Endothelial cell of umbilical vein (primary cell): ENCODE measurements at regions of chr4 and their contacts with region 1.

Region 1: DNA sequence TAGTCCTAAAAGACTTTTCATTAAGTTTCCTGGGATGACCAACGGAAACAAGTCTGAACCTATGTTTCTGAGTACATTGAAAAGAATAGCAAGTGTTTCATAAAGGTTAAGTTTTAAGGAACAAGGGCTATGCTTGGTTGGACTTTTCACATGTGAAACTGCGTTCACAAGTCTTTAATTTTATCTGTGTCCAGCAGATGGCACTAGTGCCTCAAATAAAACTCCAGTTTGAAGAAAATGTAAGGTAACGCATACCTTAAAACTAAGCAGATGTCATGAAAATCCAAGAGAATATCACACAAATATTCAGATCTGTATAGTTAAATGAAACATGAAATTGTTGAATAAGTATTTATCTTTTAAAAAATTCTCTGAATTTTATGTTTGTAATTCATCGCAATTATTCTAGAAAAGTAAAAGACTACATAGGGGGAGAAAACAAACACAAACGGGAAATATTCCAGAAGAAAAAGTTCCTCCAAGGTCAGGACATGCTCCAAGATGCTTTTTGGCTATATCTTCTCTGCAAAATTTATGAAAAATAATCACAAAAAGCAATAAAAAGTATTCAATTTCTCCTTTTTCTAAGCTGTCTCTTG is 89.6 kb upstream of the MAD2L1 start:
- DNase-seq: peak; percentile 79
- H3K4me3 ChIP-seq: no peak overlapping the region
- H3K27ac ChIP-seq: no peak overlapping the region
- H3K4me1 ChIP-seq: no peaks in the 10 kb centered on the region
- H3K27me3 ChIP-seq: no peaks in the 10 kb centered on the region
- CTCF ChIP-seq: peak; percentile 34
- POLR2A ChIP-seq: no peak

Region 2: GRCh38 chr4:120066517-120067340 is 89.5 kb before region 1 on chr4 and contains the start of gene MAD2L1:
- CTCF ChIA-PET with region 1: no interaction called
- POLR2A ChIA-PET with region 1: no interaction called
- dilution Hi-C with region 1: no loop called
- intact Hi-C with region 1: loop called (anchors 1 kb)
- DNase-seq: peak; percentile 99
- H3K4me3 ChIP-seq: peak within 1 kb of the TSS; percentile 55 to 79 (median 75)
- H3K27ac ChIP-seq: peak within 1 kb of the TSS; percentile 76
- H3K4me1 ChIP-seq: peaks cover 35% of the 10 kb centered on the region
- H3K27me3 ChIP-seq: no peaks in the 10 kb centered on the region
- CTCF ChIP-seq: no peak
- POLR2A ChIP-seq: peak; percentile 94
- total RNA-seq, gene MAD2L1: 35.4 and 41.4 TPM in 2 replicates

Region 3: GRCh38 chr4:120812216-120812615 is 656.0 kb after region 1 on chr4:
- CTCF ChIA-PET with region 1: no interaction called
- POLR2A ChIA-PET with region 1: no interaction called
- dilution Hi-C with region 1: no loop called
- intact Hi-C with region 1: loop called (anchors 5 kb)
- DNase-seq: no peak
- H3K4me3 ChIP-seq: no peak overlapping the region
- H3K27ac ChIP-seq: no peak overlapping the region
- H3K4me1 ChIP-seq: no peaks in the 10 kb centered on the region
- H3K27me3 ChIP-seq: no peaks in the 10 kb centered on the region
- CTCF ChIP-seq: no peak
- POLR2A ChIP-seq: no peak

Region 4: GRCh38 chr4:121050300-121050699 is 894.1 kb after region 1 on chr4:
- CTCF ChIA-PET with region 1: interaction called, 8 read pairs
- POLR2A ChIA-PET with region 1: no interaction called
- dilution Hi-C with region 1: no loop called
- intact Hi-C with region 1: loop called (anchors 5 kb)
- DNase-seq: peak; percentile 11
- H3K4me3 ChIP-seq: no peak overlapping the region
- H3K27ac ChIP-seq: no peak overlapping the region
- H3K4me1 ChIP-seq: no peaks in the 10 kb centered on the region
- H3K27me3 ChIP-seq: no peaks in the 10 kb centered on the region
- CTCF ChIP-seq: peak in 1 of 2 donors; percentile 8
- POLR2A ChIP-seq: no peak

Region 5: DNA sequence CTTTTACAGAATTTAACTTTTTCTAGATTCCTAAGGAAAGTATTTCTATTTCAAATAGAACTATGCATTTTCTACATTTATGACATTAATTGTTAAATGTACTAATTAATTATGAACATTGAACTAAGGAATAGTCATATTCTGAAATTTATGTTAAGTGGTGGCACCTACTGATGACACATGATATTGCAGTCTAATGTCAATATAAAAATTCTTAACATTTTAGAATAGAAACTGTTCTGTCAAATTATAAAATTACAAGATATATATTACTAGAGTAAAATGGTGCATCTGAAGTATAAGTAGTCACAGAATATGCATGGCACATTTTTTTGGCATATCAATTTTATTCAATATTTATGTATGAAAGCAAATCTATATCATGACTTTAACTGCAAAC is 956.3 kb after region 1 on chr4:
- CTCF ChIA-PET with region 1: interaction called, 13 read pairs
- POLR2A ChIA-PET with region 1: no interaction called
- dilution Hi-C with region 1: no loop called
- intact Hi-C with region 1: loop called (anchors 1 kb)
- DNase-seq: peak; percentile 7
- H3K4me3 ChIP-seq: no peak overlapping the region
- H3K27ac ChIP-seq: no peak overlapping the region
- H3K4me1 ChIP-seq: no peaks in the 10 kb centered on the region
- H3K27me3 ChIP-seq: peaks cover 5 to 8% of the 10 kb centered on the region in 2 experiments
- CTCF ChIP-seq: peak; percentile 1 to 13
- POLR2A ChIP-seq: no peak

Region 6: DNA sequence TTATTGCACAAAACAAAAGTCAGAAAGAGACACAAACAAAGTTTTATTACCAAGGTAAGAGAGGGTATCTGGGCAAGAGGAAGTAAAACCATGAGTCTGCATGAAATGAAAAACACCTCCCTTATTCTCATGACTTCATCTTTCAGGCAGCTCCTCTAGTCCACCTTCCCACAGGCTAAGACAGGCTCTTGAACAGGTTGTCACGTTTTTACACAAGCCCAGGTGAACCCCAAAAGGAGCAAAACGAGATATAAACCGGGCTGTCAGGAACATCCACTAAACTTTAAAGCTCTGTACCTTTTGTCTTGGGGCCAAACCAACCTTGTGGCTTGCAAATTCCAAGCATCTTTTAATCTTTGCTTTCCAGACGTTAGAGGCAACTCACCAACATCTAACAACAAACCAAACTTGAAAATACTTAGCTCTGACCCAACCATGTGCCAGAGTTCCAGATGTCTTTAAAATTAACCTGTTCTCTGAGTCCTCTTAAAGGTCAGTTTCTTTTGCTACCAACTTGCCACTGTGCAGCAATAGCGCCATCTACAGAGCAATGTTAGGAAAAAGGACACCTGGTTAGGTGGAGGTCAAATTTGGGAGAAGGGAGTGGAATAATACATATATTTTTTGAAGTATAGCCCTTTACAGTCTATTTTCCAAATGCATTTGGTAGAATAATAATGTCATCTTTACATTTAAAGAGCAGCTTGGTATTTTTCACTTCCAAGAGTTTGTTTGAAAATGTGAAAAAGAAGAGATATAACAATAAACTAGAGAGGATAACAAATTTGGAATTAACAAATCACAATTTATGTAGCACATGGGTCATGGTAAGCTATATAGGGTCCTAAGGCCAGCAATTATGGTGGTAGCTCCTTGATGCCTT is 1151.5 kb after region 1 on chr4:
- CTCF ChIA-PET with region 1: interaction called, 9 read pairs
- POLR2A ChIA-PET with region 1: no interaction called
- dilution Hi-C with region 1: no loop called
- intact Hi-C with region 1: loop called (anchors 1 kb)
- DNase-seq: peak; percentile 24
- H3K4me3 ChIP-seq: no peak overlapping the region
- H3K27ac ChIP-seq: no peak overlapping the region
- H3K4me1 ChIP-seq: no peaks in the 10 kb centered on the region
- H3K27me3 ChIP-seq: no peaks in the 10 kb centered on the region
- CTCF ChIP-seq: peak; percentile 38 to 39
- POLR2A ChIP-seq: no peak